ENCODE measurements at regions of chr11 and their contacts with region 1.

Region 1: GRCh38 chr11:75280227-75280701 is 39.7 kb downstream of the TPBGL start:
- DNase-seq: peak; percentile 51 to 78 (median 60)
- H3K4me3 ChIP-seq: no peak overlapping the region
- H3K4me3 Mint-ChIP-seq: peak overlapping the region in 1 of 7 donors; percentile 29
- H3K27ac ChIP-seq: no peak overlapping the region
- H3K27ac Mint-ChIP-seq: peak overlapping the region in 7 of 8 donors; percentile 71 to 84 (median 80)
- H3K4me1 ChIP-seq: peaks cover 35% of the 10 kb centered on the region
- H3K4me1 Mint-ChIP-seq: peaks cover 36 to 42% (median 42%) of the 10 kb centered on the region in 3 donors
- H3K27me3 ChIP-seq: no peaks in the 10 kb centered on the region
- H3K27me3 Mint-ChIP-seq: no peaks in the 10 kb centered on the region

Region 2: GRCh38 chr11:75014129-75014528 is 266.1 kb before region 1 on chr11:
- CTCF ChIA-PET with region 1: no interaction called
- POLR2A ChIA-PET with region 1: no interaction called
- DNase-seq: no peak
- H3K4me3 ChIP-seq: no peak overlapping the region
- H3K4me3 Mint-ChIP-seq: no peak overlapping the region
- H3K27ac ChIP-seq: no peak overlapping the region
- H3K27ac Mint-ChIP-seq: no peak overlapping the region
- H3K4me1 ChIP-seq: no peaks in the 10 kb centered on the region
- H3K4me1 Mint-ChIP-seq: no peaks in the 10 kb centered on the region
- H3K27me3 ChIP-seq: no peaks in the 10 kb centered on the region
- H3K27me3 Mint-ChIP-seq: no peaks in the 10 kb centered on the region

Region 3: GRCh38 chr11:75031771-75032549 is 248.3 kb before region 1 on chr11:
- CTCF ChIA-PET with region 1: no interaction called
- POLR2A ChIA-PET with region 1: no interaction called
- DNase-seq: peak; percentile 13 to 62 (median 28)
- H3K4me3 ChIP-seq: no peak overlapping the region
- H3K4me3 Mint-ChIP-seq: no peak overlapping the region
- H3K27ac ChIP-seq: peak overlapping the region; percentile 59
- H3K27ac Mint-ChIP-seq: no peak overlapping the region
- H3K4me1 ChIP-seq: no peaks in the 10 kb centered on the region
- H3K4me1 Mint-ChIP-seq: peaks cover 0 to 15% (median 5%) of the 10 kb centered on the region in 3 donors
- H3K27me3 ChIP-seq: no peaks in the 10 kb centered on the region
- H3K27me3 Mint-ChIP-seq: peaks cover 0 to 1% of the 10 kb centered on the region in 2 donors

Region 4: DNA sequence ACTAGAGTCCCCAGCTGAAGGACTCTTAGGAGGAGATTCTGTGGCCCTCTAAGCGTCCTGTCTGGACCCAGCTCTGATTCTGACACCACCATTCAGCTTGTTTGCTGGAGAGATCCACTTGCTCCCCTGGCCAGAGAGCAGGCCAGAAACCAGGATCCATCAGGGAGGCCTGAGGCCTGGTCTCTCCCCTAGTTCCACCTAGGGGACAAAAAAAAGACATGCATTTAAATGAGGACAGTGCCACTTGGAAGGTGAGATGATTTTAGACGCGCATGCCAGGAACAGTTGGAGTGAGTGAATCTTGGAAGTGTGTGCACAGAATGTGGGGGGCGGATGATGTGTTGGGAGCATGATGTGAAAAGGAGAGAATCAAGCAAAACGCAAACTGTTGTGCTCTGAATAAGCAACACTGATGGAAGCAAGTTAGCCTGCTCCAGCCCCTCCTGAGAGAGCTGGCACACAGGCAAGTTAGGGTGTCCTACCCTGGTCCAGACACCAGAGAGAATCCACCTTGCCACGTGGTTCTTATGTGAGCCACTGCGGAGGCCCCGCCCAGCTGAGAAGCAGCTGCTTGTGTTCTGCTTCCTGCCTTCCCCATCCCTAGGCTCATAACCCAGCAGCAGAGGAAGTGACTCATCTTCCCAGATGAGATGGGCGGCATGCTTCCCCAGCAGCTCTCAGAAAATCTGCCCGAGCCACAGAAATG is 137.4 kb before region 1 on chr11:
- CTCF ChIA-PET with region 1: interaction called, 166 read pairs
- POLR2A ChIA-PET with region 1: no interaction called
- DNase-seq: peak; percentile 43 to 78 (median 46)
- H3K4me3 ChIP-seq: peak overlapping the region; percentile 16
- H3K4me3 Mint-ChIP-seq: peak overlapping the region in 6 of 7 donors; percentile 22 to 78 (median 71)
- H3K27ac ChIP-seq: peak overlapping the region; percentile 10
- H3K27ac Mint-ChIP-seq: peak overlapping the region; percentile 57 to 95 (median 78)
- H3K4me1 ChIP-seq: peaks cover 37% of the 10 kb centered on the region
- H3K4me1 Mint-ChIP-seq: peaks cover 39 to 42% (median 40%) of the 10 kb centered on the region in 3 donors
- H3K27me3 ChIP-seq: no peaks in the 10 kb centered on the region
- H3K27me3 Mint-ChIP-seq: peaks cover 2% of the 10 kb centered on the region in 2 donors

Region 5: GRCh38 chr11:75328426-75329277 is 48.4 kb after region 1 on chr11:
- CTCF ChIA-PET with region 1: interaction called, 13 read pairs
- POLR2A ChIA-PET with region 1: no interaction called
- DNase-seq: peak in 4 of 5 donors; percentile 10 to 72 (median 60)
- H3K4me3 ChIP-seq: peak overlapping the region; percentile 40
- H3K4me3 Mint-ChIP-seq: peak overlapping the region in 6 of 7 donors; percentile 41 to 66 (median 55)
- H3K27ac ChIP-seq: peak overlapping the region; percentile 52
- H3K27ac Mint-ChIP-seq: peak overlapping the region; percentile 59 to 86 (median 75)
- H3K4me1 ChIP-seq: peaks cover 43% of the 10 kb centered on the region
- H3K4me1 Mint-ChIP-seq: peaks cover 44 to 65% (median 57%) of the 10 kb centered on the region in 3 donors
- H3K27me3 ChIP-seq: no peaks in the 10 kb centered on the region
- H3K27me3 Mint-ChIP-seq: no peaks in the 10 kb centered on the region

Region 6: DNA sequence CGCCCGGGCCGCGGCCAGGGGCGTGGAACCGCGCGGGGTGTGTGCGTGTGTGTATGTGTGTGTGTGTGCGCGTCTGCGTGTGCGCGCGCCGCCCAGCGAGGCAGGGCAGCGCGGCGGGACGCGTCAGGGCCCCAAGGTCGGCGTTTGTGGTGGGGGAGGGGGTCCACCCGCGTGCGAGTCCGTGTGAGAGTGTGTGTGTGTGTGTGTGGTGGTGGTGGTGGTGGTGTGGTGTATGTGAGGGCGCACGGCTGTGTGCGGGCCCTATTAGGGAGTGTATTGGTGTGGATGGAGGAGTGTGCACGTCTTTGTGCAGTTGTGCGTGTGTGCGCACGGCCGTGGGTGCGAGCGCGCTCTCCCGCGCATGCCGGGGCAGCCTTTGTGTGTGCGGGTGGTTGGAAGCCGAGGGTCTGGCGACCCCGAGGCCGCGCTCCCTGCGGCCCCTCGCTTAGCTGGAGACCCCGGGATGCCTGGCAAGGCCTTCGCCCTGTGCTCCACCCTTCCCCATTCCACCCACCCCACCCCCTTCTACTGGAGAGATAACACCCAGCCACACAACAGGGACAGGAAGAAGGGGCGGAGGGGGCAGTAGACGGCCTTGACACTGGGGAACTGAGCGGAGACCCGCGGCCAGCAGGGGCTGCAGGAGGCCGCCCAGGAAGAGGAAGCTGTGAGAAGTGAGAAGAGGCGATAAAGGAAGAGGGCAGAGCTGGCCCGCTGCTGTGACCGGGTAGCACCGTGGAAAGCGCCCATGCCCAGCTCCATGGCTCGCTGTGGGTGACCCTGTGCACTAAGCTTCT is 71.7 kb after region 1 on chr11:
- CTCF ChIA-PET with region 1: interaction called, 10 read pairs
- POLR2A ChIA-PET with region 1: interaction called, 5 read pairs
- DNase-seq: peak; percentile 20 to 79 (median 68)
- H3K4me3 ChIP-seq: peak overlapping the region; percentile 72
- H3K4me3 Mint-ChIP-seq: peak overlapping the region; percentile 89 to 96 (median 92)
- H3K27ac ChIP-seq: peak overlapping the region; percentile 76
- H3K27ac Mint-ChIP-seq: peak overlapping the region; percentile 78 to 97 (median 88)
- H3K4me1 ChIP-seq: peaks cover 50% of the 10 kb centered on the region
- H3K4me1 Mint-ChIP-seq: peaks cover 46 to 62% (median 58%) of the 10 kb centered on the region in 3 donors
- H3K27me3 ChIP-seq: no peaks in the 10 kb centered on the region
- H3K27me3 Mint-ChIP-seq: peaks cover 2 to 8% of the 10 kb centered on the region in 2 donors

Region 7: GRCh38 chr11:75399344-75400145 is 119.3 kb after region 1 on chr11 and contains the start of gene RPS3:
- CTCF ChIA-PET with region 1: interaction called, 16 read pairs
- POLR2A ChIA-PET with region 1: interaction called, 6 read pairs
- DNase-seq: peak; percentile 78 to 92 (median 85)
- H3K4me3 ChIP-seq: peak within 1 kb of the TSS; percentile 73
- H3K4me3 Mint-ChIP-seq: peak within 1 kb of the TSS; percentile 91 to 98 (median 95)
- H3K27ac ChIP-seq: peak within 1 kb of the TSS; percentile 88
- H3K27ac Mint-ChIP-seq: peak within 1 kb of the TSS; percentile 87 to 99 (median 96)
- H3K4me1 ChIP-seq: peaks cover 25% of the 10 kb centered on the region
- H3K4me1 Mint-ChIP-seq: peaks cover 48 to 53% (median 48%) of the 10 kb centered on the region in 3 donors
- H3K27me3 ChIP-seq: no peaks in the 10 kb centered on the region
- H3K27me3 Mint-ChIP-seq: no peaks in the 10 kb centered on the region
- total RNA-seq, gene RPS3: 3,916 to 3,935 TPM